Gastrocnemius medialis (tissue), 4 donors: ENCODE measurements at regions of chr17 and their contacts with region 1.

Region 1: DNA sequence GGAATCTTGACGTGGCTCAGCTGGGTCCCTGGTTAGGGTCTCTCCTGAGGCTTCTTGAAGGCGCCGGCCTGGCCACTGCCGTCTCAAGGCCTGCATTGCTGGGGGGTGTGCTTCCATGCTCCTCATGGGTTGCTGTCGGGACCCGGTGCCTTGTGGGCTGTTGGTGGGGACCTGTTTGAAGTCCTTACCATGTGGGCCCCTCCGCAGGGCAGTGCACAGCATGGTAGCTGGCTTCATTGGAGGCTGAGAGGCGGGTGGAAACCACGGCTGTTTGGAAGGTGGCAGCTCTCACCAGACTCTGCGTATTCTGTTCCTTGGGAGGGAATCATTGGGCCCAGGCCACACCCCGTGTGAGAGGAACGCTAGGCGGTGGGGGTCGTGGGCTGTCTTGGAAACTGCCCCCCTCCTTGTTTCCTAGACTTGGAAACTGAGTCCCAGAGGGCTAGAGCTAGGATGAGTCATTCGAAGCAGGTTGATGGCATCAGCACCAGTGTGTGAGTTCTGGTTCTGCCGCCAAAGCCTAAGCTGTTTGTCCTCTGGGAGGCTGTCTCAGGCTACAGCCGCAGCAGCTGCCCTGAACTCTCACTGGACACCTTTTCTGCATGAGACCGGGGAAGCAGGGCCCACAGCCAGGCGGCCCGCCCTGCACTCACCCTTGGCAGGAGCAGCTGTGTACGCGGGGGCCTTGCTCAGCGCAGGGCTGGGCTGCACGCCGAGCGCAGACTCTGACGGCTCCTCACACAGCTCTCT is 35.2 kb downstream of the ZNF750 start:
- DNase-seq: peak; percentile 92 to 98
- ATAC-seq: peak; percentile 97 to 98
- H3K4me3 ChIP-seq: peak overlapping the region in 2 of 4 donors; percentile 3 to 14
- H3K27ac ChIP-seq: peak overlapping the region; percentile 83 to 92 (median 88)
- H3K4me1 ChIP-seq: peaks cover 16 to 22% of the 10 kb centered on the region in 2 donors
- H3K27me3 ChIP-seq: no peaks in the 10 kb centered on the region
- CTCF ChIP-seq: peak in 1 of 5 experiments; percentile 13
- POLR2A ChIP-seq: peak in 1 of 2 donors; percentile 24

Region 2: DNA sequence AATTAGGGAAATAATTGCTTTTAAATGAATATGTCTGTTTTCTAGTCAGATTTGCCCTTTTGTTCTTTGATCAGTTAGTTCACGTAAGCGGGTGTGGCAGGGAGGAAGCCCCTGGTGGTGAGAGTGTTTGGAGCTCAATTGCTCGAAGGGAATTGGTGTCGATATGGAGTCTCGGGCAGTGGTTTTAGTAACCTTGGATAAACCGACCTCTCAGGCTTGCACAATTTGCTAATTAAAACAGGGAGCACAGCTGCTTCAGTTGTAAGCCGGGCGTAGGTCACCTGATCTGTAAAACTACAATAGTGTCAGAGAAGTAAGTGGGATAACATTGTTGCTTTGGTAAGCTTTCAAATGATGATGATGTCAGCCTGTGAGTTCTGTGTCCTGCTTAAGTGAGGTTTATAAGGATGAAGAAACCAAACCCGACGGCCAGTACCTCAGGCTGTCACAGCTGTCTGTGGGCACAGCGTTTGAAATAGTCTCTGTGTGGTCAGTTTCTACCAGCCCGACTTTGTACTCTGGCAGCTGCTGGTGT is 32.3 kb after region 1 on chr17:
- in situ Hi-C with region 1: no loop called
- intact Hi-C with region 1: loop called (anchors 1 kb)
- DNase-seq: peak; percentile 32 to 66
- ATAC-seq: peak; percentile 61 to 68
- H3K4me3 ChIP-seq: no peak overlapping the region
- H3K27ac ChIP-seq: peak overlapping the region; percentile 64 to 88 (median 84)
- H3K4me1 ChIP-seq: peaks cover 22 to 33% of the 10 kb centered on the region in 2 donors
- H3K27me3 ChIP-seq: no peaks in the 10 kb centered on the region
- CTCF ChIP-seq: peak in 4 of 5 experiments; percentile 15 to 37 (median 32)
- POLR2A ChIP-seq: peak in 1 of 2 donors; percentile 53